Left cardiac atrium (tissue), 4 donors: ENCODE measurements at regions of chr11 and their contacts with region 1.

Region 1: GRCh38 chr11:82927254-82927880 is 25.8 kb downstream of the DDIAS start:
- DNase-seq: no peak
- ATAC-seq: peak; percentile 41 to 50

Region 2: DNA sequence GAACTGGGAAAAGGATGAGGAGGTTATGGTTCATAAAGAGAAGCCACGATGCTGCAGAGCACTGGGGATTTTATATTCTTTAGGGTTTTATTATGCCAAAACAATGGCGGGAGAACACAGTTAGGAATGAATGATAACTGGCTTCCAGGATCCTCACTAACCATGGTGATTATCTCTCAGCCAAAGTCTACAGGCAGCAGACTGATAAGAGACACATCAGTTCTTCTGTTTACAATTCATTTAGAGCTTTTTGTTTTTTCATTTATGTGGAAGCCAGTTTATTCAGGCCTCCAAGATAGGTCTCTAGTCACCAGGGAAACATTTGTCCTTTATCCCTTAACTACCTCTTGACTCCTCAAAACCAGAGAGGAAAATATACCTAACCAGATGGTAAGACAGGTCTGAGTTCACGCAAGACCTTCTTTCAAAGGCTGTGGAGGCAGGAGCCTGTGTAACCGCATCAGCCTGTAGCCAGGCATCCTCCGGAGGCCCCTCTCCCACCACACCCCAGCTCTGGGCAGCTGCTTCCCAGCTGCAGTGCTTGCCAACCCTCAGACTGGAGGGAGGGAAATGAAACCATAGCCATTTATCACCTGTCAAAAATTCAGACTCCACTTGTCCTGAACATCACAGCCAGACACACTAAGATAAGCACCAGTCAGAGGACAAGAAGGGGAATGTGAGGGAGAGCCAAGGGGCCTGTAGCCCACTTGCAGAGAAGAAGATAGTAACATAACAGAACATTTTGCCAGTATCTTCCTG is 136.5 kb before region 1 on chr11:
- intact Hi-C with region 1: no loop called
- DNase-seq: peak; percentile 42
- ATAC-seq: peak; percentile 92 to 95

Region 3: GRCh38 chr11:83078269-83078668 is 150.9 kb after region 1 on chr11:
- intact Hi-C with region 1: loop called in 1 of 2 experiments (anchors 5 kb)
- DNase-seq: no peak
- ATAC-seq: no peak